Naive thymus-derived CD8-positive, alpha-beta T cell (primary cell): ENCODE measurements at regions of chr12 and their contacts with region 1.

Region 1: GRCh38 chr12:31804185-31804504 is 75.3 kb upstream of the AMN1 start:
- DNase-seq: no peak
- ATAC-seq: peak in 1 of 2 donors; percentile 28
- H3K4me3 Mint-ChIP-seq: peak overlapping the region; percentile 85 to 100 (median 94)
- H3K27ac Mint-ChIP-seq: peak overlapping the region; percentile 91 to 99 (median 95)
- H3K4me1 Mint-ChIP-seq: peaks cover 28 to 64% (median 58%) of the 10 kb centered on the region in 4 donors
- H3K27me3 Mint-ChIP-seq: no peaks in the 10 kb centered on the region

Region 2: DNA sequence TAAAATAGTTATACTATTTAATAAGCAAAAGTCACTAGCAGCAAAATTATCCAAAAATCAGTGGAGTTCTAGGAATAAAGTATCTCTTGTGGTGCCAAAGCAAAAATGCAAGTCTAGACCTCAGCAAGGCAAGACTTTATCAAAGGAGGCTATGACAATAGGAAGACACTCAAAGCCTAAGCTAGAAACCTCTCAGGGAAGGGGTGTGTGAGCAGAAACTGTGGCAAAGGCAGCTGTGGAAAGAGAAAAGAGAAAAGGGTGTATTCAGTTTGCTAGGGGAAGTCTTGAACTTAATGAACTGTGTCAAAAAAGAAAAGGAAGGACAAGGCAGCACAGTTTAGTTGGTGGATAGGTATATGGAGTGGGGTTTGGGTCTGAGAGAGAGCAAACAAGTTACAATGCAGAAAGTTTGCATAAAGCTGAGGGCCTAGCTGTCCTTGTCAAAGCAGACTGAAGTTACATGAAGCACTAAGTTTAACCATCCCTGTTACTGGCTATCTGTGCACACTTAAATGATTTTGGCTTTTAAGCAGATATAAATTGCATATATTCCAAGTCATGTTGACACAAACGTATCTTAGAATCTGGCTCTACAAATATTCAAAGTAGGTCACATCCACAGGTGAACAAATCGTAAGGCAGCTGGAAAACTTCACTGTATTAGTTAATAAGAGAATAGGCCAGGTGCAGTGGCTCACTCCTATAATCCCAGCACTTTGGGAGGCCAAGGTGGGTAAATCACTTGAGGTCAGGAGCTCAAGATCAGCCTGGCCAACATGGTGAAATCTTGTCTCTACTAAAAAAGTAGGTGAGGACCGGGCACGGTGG is 44.3 kb before region 1 on chr12:
- POLR2A ChIA-PET with region 1: no interaction called
- DNase-seq: no peak
- ATAC-seq: no peak
- H3K4me3 Mint-ChIP-seq: no peak overlapping the region
- H3K27ac Mint-ChIP-seq: peak overlapping the region in 7 of 10 donors; percentile 0 to 76 (median 8)
- H3K4me1 Mint-ChIP-seq: peaks cover 11 to 23% (median 17%) of the 10 kb centered on the region in 4 donors
- H3K27me3 Mint-ChIP-seq: no peaks in the 10 kb centered on the region

Region 3: DNA sequence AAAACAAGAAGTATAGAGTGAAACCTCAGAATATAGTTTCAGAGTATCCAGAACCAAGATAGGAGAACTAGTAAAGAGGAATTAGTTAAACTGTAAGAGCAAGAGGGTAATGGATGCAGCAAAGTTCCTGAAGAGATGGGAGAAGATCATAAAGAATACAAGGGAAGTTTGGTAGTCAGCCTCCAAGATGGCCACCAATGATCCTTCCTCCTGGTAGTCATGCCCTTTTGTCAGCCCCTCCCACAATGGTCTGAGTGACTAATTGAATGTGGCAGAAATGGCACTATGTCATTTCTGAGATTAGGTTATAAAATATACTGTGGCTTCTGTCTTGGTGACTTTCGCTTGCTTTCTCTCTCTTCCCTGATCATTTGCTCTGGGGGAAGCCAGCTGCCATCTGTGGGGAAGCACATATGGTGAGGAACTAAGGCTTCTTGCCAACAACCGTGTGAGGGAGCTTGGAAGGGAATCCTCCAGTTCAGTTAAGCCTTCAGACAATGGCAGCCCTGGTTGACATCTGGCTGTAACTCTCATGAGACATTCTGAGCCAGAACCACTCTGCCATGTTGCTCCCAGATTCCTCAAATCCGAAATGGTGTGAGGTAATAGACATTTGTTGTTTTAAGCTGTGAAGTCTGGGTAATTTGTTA is 20.0 kb before region 1 on chr12:
- POLR2A ChIA-PET with region 1: interaction called, 15 read pairs
- DNase-seq: no peak
- ATAC-seq: no peak
- H3K4me3 Mint-ChIP-seq: no peak overlapping the region
- H3K27ac Mint-ChIP-seq: peak overlapping the region in 3 of 10 donors; percentile 16 to 63 (median 35)
- H3K4me1 Mint-ChIP-seq: peaks cover 7 to 30% (median 23%) of the 10 kb centered on the region in 4 donors
- H3K27me3 Mint-ChIP-seq: no peaks in the 10 kb centered on the region

Region 4: DNA sequence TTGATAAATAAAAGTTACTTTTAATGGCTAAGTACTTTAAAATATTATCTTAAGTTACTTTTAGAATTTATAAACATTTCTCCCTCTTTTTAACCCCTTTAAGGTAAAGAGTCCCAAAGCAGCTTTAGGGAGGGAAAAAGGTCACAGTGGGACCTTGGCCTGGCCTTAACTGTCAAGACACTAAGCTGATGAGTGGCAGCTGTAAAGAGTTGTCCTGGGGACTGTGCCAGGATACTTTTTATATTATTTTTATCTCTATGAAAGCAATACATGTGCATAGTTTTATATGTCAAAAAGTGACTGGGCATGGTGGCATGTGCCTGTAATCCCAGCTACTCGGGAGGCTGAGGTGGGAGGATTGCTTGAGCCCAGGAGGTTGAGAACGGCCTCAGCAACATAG is 60.9 kb after region 1 on chr12:
- POLR2A ChIA-PET with region 1: no interaction called
- DNase-seq: no peak
- ATAC-seq: no peak
- H3K4me3 Mint-ChIP-seq: no peak overlapping the region
- H3K27ac Mint-ChIP-seq: no peak overlapping the region
- H3K4me1 Mint-ChIP-seq: peaks cover 0 to 40% (median 14%) of the 10 kb centered on the region in 4 donors
- H3K27me3 Mint-ChIP-seq: no peaks in the 10 kb centered on the region

Region 5: DNA sequence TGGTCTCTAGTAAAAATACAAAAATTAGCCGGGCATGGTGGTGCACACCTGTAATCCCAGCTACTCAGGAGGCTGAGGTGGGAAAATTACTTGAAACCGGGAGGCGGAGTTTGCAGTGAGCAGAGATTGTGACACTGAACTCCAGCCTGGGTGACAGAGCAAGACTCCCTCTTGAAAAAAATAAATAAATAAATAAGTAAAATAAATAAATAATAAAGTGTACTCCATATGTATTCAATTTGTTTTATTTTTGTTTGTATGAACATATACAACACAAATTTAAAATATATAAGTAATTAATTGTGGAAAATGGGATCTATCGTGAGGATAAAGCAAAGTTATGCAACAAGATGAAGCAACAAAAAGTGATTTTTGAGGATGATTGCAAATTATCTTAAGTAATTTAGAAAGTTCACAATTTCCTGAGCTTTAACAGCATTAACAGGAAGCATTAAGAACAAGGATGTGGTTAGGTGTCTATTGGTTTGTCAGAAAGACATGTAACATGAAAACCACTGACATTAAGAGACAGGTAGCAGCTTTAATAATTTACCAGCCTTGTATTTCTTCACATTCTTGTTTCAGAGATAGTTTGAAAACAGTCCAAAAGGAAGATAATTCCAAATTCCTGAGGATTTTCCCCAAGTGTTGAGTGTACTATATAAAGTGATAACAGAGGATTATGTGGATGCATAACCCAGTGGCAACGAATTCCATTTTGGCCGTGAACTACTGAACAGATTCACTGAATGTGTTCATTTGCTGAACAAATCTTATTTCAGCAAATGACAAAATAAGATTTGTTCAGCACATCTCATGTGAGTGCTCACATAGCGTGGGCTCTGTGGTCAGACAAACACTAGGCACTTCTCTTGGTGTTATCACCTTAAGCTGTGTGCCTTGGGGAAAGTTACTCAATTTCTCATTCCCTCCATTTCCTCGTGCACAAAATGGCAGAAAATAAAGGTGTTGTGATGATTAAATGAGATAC is 86.4 kb after region 1 on chr12:
- POLR2A ChIA-PET with region 1: interaction called, 42 read pairs
- DNase-seq: peak in 3 of 10 donors; percentile 64 to 76 (median 72)
- ATAC-seq: peak; percentile 77 to 98
- H3K4me3 Mint-ChIP-seq: peak overlapping the region in 9 of 10 donors; percentile 57 to 81 (median 72)
- H3K27ac Mint-ChIP-seq: peak overlapping the region; percentile 51 to 96 (median 91)
- H3K4me1 Mint-ChIP-seq: peaks cover 17 to 81% (median 58%) of the 10 kb centered on the region in 4 donors
- H3K27me3 Mint-ChIP-seq: no peaks in the 10 kb centered on the region

Region 6: DNA sequence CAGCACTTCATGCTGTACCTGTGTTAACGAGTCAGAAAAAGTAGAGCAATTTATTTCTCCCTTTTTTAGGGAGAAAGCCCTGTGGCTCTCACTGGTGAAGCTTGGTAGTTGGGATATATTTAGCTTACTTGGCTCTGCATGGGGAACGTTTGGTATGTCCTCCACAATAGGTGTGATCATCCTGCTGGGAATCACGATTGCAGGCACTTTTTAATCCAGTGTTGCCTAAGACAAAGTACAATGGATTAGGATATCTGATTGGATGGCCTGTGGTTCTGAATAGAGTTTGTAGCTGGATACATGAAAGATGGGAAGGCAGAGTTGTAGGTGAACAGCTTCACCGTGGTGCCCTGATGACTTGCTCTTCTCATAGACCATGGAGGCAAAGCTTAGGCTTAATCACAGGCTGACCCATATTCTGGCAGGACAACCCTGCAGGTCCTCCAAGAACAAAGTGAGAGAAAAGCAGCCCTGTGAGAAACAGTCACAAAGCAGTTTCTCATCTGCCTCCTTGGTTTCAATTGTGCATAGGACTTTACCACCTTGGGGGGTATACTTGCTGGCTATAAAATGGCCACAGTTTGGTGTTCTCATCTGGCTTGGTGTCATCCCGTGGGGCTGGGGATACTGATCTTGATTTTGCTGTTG is 162.5 kb after region 1 on chr12:
- POLR2A ChIA-PET with region 1: interaction called, 96 read pairs
- DNase-seq: no peak
- ATAC-seq: peak; percentile 5 to 7
- H3K4me3 Mint-ChIP-seq: peak overlapping the region; percentile 93 to 99 (median 97)
- H3K27ac Mint-ChIP-seq: peak overlapping the region; percentile 94 to 99 (median 97)
- H3K4me1 Mint-ChIP-seq: peaks cover 47 to 99% (median 88%) of the 10 kb centered on the region in 4 donors
- H3K27me3 Mint-ChIP-seq: no peaks in the 10 kb centered on the region